Activated CD4-positive, alpha-beta memory T cell treated with anti-CD3 and anti-CD28 coated beads, Interleukin-2, amount 10 ng/mL, durations not matched to agents 7 days and 5 days (primary cell): ENCODE measurements at regions of chr15 and their contacts with region 1.

Region 1: GRCh38 chr15:98779463-98780071 is 131.2 kb downstream of the IGF1R start:
- DNase-seq: peak; percentile 72
- H3K4me3 Mint-ChIP-seq: no peak overlapping the region
- H3K27ac Mint-ChIP-seq: no peak overlapping the region
- H3K4me1 Mint-ChIP-seq: peaks cover 15% of the 10 kb centered on the region
- H3K27me3 Mint-ChIP-seq: peaks cover 4% of the 10 kb centered on the region

Region 2: GRCh38 chr15:98791047-98791701 is 11.6 kb after region 1 on chr15:
- CTCF ChIA-PET with region 1: interaction called, 10 read pairs
- POLR2A ChIA-PET with region 1: no interaction called
- DNase-seq: no peak
- H3K4me3 Mint-ChIP-seq: no peak overlapping the region
- H3K27ac Mint-ChIP-seq: no peak overlapping the region
- H3K4me1 Mint-ChIP-seq: peaks cover 2% of the 10 kb centered on the region
- H3K27me3 Mint-ChIP-seq: peaks cover 3% of the 10 kb centered on the region

Region 3: GRCh38 chr15:98881526-98882520 is 102.3 kb after region 1 on chr15:
- CTCF ChIA-PET with region 1: interaction called, 37 read pairs
- POLR2A ChIA-PET with region 1: no interaction called
- DNase-seq: no peak
- H3K4me3 Mint-ChIP-seq: no peak overlapping the region
- H3K27ac Mint-ChIP-seq: no peak overlapping the region
- H3K4me1 Mint-ChIP-seq: no peaks in the 10 kb centered on the region
- H3K27me3 Mint-ChIP-seq: no peaks in the 10 kb centered on the region

Region 4: DNA sequence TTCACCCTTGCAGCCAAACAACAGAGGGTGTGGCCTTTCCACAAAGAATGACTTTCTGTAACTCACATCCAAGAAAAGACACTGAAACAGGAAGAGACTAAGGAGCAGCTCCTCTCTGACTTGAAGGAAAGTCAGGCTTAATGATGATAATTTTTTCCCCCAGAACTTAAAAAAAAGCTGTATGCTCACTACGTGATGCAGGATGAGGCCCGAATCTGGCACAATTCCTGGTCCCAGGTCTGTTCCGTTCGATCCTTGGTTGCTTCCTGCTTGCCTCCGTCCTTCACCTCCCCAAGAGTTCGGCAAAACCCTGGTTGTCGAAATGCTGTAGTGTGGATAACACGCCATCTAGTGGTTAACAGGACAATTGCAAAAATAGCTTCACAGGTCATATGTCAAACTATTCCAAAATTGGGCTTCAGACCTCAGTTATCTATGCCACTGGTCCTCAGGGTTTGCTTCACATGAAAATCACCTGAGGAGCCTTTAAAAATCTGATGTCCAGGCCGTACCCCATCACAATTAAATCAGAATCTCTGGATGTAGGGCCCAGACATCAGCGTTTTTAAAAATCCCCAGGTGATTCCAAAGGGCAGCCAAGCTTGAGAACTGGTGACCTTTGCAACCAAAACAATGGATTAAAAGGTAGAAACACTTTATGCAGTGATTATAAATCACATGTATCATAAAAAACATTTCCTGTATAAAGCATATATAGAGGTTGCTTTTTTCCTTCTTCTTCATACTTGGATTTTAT is 297.2 kb after region 1 on chr15:
- CTCF ChIA-PET with region 1: interaction called, 11 read pairs
- POLR2A ChIA-PET with region 1: no interaction called
- DNase-seq: peak; percentile 52
- H3K4me3 Mint-ChIP-seq: peak overlapping the region; percentile 77
- H3K27ac Mint-ChIP-seq: no peak overlapping the region
- H3K4me1 Mint-ChIP-seq: peaks cover 7% of the 10 kb centered on the region
- H3K27me3 Mint-ChIP-seq: peaks cover 14% of the 10 kb centered on the region